ENCODE measurements at regions of chr19 and their contacts with region 1.

Region 1: GRCh38 chr19:41263850-41264580 is at the start of gene HNRNPUL1:
- DNase-seq: peak; percentile 99
- H3K4me3 Mint-ChIP-seq: peak within 1 kb of the TSS; percentile 79
- H3K27ac Mint-ChIP-seq: peak within 1 kb of the TSS; percentile 100
- H3K4me1 Mint-ChIP-seq: peaks cover 45% of the 10 kb centered on the region
- H3K27me3 Mint-ChIP-seq: peaks cover 11% of the 10 kb centered on the region

Region 2: DNA sequence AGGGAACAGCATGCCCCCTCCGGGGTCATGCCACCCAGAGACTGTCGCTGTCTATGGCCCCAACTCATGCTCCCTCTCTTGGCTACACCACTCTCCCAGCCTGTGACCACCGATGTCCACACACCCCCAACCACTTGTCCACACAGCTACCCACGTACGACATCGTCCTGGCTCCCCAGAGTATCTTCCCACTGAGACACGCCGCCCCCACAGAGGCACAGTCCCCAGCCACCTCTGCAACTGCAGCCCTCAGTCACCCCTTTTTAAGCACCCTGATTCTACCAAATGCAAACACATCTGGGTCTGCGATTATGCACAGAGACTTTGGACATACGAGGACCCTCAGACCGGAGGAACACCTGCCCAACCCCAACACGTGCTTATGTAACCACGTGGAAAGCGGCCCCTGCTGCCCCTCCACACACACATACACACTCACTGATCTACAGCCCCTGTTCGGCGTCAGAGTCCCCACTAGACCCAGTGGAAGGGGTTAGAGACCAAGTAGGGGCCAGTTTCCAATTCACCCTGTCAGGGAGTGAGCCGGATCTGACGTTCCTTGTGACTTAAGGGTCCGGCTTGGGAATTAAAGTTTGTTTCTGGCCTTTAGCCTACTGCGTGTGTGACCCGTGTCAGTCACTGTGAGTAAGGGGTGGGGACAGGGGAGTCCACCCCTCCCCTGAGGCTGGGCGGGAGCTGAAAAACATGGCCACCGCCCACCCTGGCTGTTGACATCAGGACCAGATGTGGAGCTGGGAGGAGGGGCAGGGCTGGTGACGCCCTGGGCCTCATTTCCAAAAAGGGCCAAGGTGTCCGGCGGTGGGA is 56.9 kb before region 1 on chr19:
- CTCF ChIA-PET with region 1: interaction called, 92 read pairs
- DNase-seq: no peak
- H3K4me3 Mint-ChIP-seq: no peak overlapping the region
- H3K27ac Mint-ChIP-seq: no peak overlapping the region
- H3K4me1 Mint-ChIP-seq: peaks cover 13% of the 10 kb centered on the region
- H3K27me3 Mint-ChIP-seq: peaks cover 29% of the 10 kb centered on the region

Region 3: GRCh38 chr19:41298348-41298964 is 34.4 kb after region 1 on chr19:
- CTCF ChIA-PET with region 1: interaction called, 13 read pairs
- DNase-seq: no peak
- H3K4me3 Mint-ChIP-seq: no peak overlapping the region
- H3K27ac Mint-ChIP-seq: peak overlapping the region; percentile 64
- H3K4me1 Mint-ChIP-seq: peaks cover 76% of the 10 kb centered on the region
- H3K27me3 Mint-ChIP-seq: no peaks in the 10 kb centered on the region